GM12878 (cell line): ENCODE measurements at regions of chr2 and their contacts with region 1.

Region 1: DNA sequence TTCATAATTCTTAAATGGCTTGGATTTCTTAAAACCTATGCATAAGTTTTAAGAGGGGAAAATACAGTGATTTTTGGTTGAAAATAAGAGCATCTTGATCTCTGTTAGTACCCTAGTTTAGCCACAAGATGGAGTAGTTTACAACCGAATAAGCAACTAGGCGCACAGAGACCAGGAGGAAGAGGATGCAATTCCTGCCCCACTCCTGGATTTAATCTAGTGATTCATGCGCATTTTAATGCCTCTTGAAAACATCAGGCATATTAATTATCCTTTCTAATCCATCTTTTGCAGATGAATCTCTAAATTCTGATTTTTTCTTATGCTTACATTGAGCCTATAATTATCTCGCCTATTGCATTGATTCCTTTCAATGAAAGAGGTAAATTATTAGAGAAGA is 76.7 kb downstream of the MRPS9 start:
- DNase-seq: no peak
- ATAC-seq: peak; percentile 70
- H3K4me3 ChIP-seq: no peak overlapping the region
- H3K27ac ChIP-seq: no peak overlapping the region
- H3K4me1 ChIP-seq: peaks cover 5% of the 10 kb centered on the region
- H3K27me3 ChIP-seq: no peaks in the 10 kb centered on the region
- CTCF ChIP-seq: peak; percentile 70 to 79 (median 74)
- EP300 ChIP-seq: no peak
- POLR2A ChIP-seq: no peak
- RAD21 ChIP-seq: peak; percentile 94

Region 2: GRCh38 chr2:104638190-104638858 is 476.2 kb before region 1 on chr2:
- CTCF ChIA-PET with region 1: no interaction called
- POLR2A ChIA-PET with region 1: no interaction called
- RAD21 ChIA-PET with region 1: no interaction called
- SMC1A ChIA-PET with region 1: no interaction called
- in situ Hi-C with region 1: no loop called
- intact Hi-C with region 1: no loop called
- DNase-seq: no peak
- ATAC-seq: no peak
- H3K4me3 ChIP-seq: no peak overlapping the region
- H3K27ac ChIP-seq: no peak overlapping the region
- H3K4me1 ChIP-seq: no peaks in the 10 kb centered on the region
- H3K27me3 ChIP-seq: no peaks in the 10 kb centered on the region
- CTCF ChIP-seq: no peak
- EP300 ChIP-seq: no peak
- POLR2A ChIP-seq: no peak
- RAD21 ChIP-seq: no peak

Region 3: GRCh38 chr2:104804148-104804890 is 310.2 kb before region 1 on chr2:
- CTCF ChIA-PET with region 1: no interaction called
- POLR2A ChIA-PET with region 1: no interaction called
- RAD21 ChIA-PET with region 1: no interaction called
- SMC1A ChIA-PET with region 1: no interaction called
- in situ Hi-C with region 1: no loop called
- intact Hi-C with region 1: no loop called
- DNase-seq: no peak
- ATAC-seq: no peak
- H3K4me3 ChIP-seq: no peak overlapping the region
- H3K27ac ChIP-seq: no peak overlapping the region
- H3K4me1 ChIP-seq: no peaks in the 10 kb centered on the region
- H3K27me3 ChIP-seq: no peaks in the 10 kb centered on the region
- CTCF ChIP-seq: no peak
- EP300 ChIP-seq: no peak
- POLR2A ChIP-seq: no peak
- RAD21 ChIP-seq: no peak

Region 4: GRCh38 chr2:105005181-105005951 is 109.2 kb before region 1 on chr2:
- CTCF ChIA-PET with region 1: no interaction called
- POLR2A ChIA-PET with region 1: no interaction called
- RAD21 ChIA-PET with region 1: no interaction called
- SMC1A ChIA-PET with region 1: no interaction called
- in situ Hi-C with region 1: no loop called
- intact Hi-C with region 1: no loop called
- DNase-seq: no peak
- ATAC-seq: no peak
- H3K4me3 ChIP-seq: no peak overlapping the region
- H3K27ac ChIP-seq: no peak overlapping the region
- H3K4me1 ChIP-seq: no peaks in the 10 kb centered on the region
- H3K27me3 ChIP-seq: no peaks in the 10 kb centered on the region
- CTCF ChIP-seq: no peak
- EP300 ChIP-seq: no peak
- POLR2A ChIP-seq: no peak
- RAD21 ChIP-seq: no peak

Region 5: GRCh38 chr2:105068875-105069274 is 45.7 kb before region 1 on chr2:
- CTCF ChIA-PET with region 1: no interaction called
- POLR2A ChIA-PET with region 1: no interaction called
- RAD21 ChIA-PET with region 1: no interaction called
- SMC1A ChIA-PET with region 1: no interaction called
- in situ Hi-C with region 1: no loop called
- intact Hi-C with region 1: no loop called
- DNase-seq: no peak
- ATAC-seq: no peak
- H3K4me3 ChIP-seq: no peak overlapping the region
- H3K27ac ChIP-seq: no peak overlapping the region
- H3K4me1 ChIP-seq: peaks cover 5% of the 10 kb centered on the region; the same call in 1 of the 2 replicates
- H3K27me3 ChIP-seq: no peaks in the 10 kb centered on the region
- CTCF ChIP-seq: no peak
- EP300 ChIP-seq: no peak
- POLR2A ChIP-seq: no peak
- RAD21 ChIP-seq: no peak

Region 6: GRCh38 chr2:105099153-105099552 is 15.4 kb before region 1 on chr2:
- CTCF ChIA-PET with region 1: interaction called, 18 read pairs
- POLR2A ChIA-PET with region 1: no interaction called
- RAD21 ChIA-PET with region 1: no interaction called
- SMC1A ChIA-PET with region 1: interaction called, 4 read pairs
- in situ Hi-C with region 1: no loop called
- intact Hi-C with region 1: no loop called
- DNase-seq: no peak
- ATAC-seq: no peak
- H3K4me3 ChIP-seq: no peak overlapping the region
- H3K27ac ChIP-seq: no peak overlapping the region
- H3K4me1 ChIP-seq: no peaks in the 10 kb centered on the region
- H3K27me3 ChIP-seq: no peaks in the 10 kb centered on the region
- CTCF ChIP-seq: no peak
- EP300 ChIP-seq: no peak
- POLR2A ChIP-seq: no peak
- RAD21 ChIP-seq: no peak

Region 7: DNA sequence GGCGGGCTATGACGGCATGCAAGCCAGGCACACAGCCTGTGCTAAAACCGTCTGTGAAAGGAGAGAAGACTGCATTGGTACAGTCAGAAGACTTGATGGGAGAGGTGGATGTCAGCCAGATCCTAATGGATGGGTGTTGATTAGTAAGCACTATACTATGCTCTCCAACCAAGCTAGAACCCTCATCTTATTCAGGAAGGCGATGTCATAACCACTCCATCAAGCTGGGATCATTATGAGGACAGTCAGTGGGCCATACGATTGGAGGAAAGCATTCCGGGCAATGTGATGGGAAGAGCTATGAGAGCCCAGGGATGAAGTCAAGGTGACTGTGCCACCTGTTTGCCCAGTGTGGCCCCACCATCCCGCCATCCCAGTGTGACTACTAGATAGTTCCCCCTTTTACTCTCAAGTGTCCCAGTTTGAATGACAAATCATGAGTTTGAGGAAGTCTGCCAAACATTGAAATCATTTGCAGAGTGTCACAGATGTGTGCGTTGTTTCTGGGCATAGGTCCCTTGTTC is 10.3 kb before region 1 on chr2:
- CTCF ChIA-PET with region 1: interaction called, 18 read pairs
- POLR2A ChIA-PET with region 1: no interaction called
- RAD21 ChIA-PET with region 1: interaction called, 3 read pairs
- SMC1A ChIA-PET with region 1: interaction called, 4 read pairs
- in situ Hi-C with region 1: no loop called
- intact Hi-C with region 1: no loop called
- DNase-seq: no peak
- ATAC-seq: no peak
- H3K4me3 ChIP-seq: no peak overlapping the region
- H3K27ac ChIP-seq: no peak overlapping the region
- H3K4me1 ChIP-seq: no peaks in the 10 kb centered on the region
- H3K27me3 ChIP-seq: no peaks in the 10 kb centered on the region
- CTCF ChIP-seq: no peak
- EP300 ChIP-seq: no peak
- POLR2A ChIP-seq: no peak
- RAD21 ChIP-seq: no peak

Region 8: GRCh38 chr2:105125428-105125827 is 10.9 kb after region 1 on chr2:
- CTCF ChIA-PET with region 1: interaction called, 15 read pairs
- POLR2A ChIA-PET with region 1: no interaction called
- RAD21 ChIA-PET with region 1: no interaction called
- SMC1A ChIA-PET with region 1: no interaction called
- in situ Hi-C with region 1: no loop called
- intact Hi-C with region 1: no loop called
- DNase-seq: no peak
- ATAC-seq: no peak
- H3K4me3 ChIP-seq: no peak overlapping the region
- H3K27ac ChIP-seq: no peak overlapping the region
- H3K4me1 ChIP-seq: peaks cover 10% of the 10 kb centered on the region
- H3K27me3 ChIP-seq: no peaks in the 10 kb centered on the region
- CTCF ChIP-seq: no peak
- EP300 ChIP-seq: no peak
- POLR2A ChIP-seq: no peak
- RAD21 ChIP-seq: no peak

Region 9: GRCh38 chr2:105179469-105180372 is 65.2 kb after region 1 on chr2:
- CTCF ChIA-PET with region 1: interaction called, 26 read pairs
- POLR2A ChIA-PET with region 1: no interaction called
- RAD21 ChIA-PET with region 1: interaction called, 10 read pairs
- SMC1A ChIA-PET with region 1: interaction called, 8 read pairs
- in situ Hi-C with region 1: no loop called
- intact Hi-C with region 1: loop called (anchors 1 kb)
- DNase-seq: no peak
- ATAC-seq: peak; percentile 25; the same call in 1 of the 3 replicates
- H3K4me3 ChIP-seq: no peak overlapping the region
- H3K27ac ChIP-seq: no peak overlapping the region
- H3K4me1 ChIP-seq: peaks cover 10% of the 10 kb centered on the region
- H3K27me3 ChIP-seq: no peaks in the 10 kb centered on the region; a peak in 1 of 4 replicates
- CTCF ChIP-seq: peak; percentile 28 to 40 (median 38)
- EP300 ChIP-seq: no peak
- POLR2A ChIP-seq: no peak
- RAD21 ChIP-seq: 0 out of 2 replicates have a peak, but pooled peaks have one; percentile 19

Region 10: DNA sequence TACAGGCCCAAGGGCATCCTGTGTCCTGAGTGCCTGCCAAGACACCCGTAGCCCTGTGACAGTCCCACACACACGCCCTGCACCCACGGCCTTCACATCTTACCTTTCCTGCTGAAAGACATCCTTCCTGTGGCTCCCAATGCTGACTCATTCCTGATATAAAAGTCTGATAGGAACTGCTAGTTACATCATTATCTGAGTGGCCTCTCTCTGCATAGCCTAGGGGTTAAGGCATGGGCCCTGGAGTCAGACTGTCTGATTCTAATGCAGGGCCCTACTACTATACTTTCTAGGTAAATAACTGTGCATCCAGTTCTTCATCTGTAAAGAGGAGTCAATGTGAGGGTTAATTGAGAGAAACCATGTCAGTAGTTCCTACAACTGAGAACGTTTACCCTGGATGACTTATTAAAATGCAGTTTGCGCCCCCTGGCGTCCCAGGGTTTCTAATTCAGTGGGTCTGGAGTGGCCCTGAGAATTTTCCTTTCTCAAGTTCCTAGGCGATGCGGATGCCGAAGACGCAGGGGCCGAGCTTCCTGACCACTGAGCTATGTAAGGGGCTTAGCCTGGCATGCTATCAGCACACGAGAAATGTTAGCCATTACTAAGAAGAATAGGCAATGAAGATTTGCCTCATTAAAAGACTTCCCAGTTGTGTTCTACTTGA is 121.0 kb after region 1 on chr2:
- CTCF ChIA-PET with region 1: interaction called, 291 read pairs
- POLR2A ChIA-PET with region 1: no interaction called
- RAD21 ChIA-PET with region 1: interaction called, 41 read pairs
- SMC1A ChIA-PET with region 1: interaction called, 37 read pairs
- in situ Hi-C with region 1: loop called (anchors 5 kb)
- intact Hi-C with region 1: loop called (anchors 1 kb)
- DNase-seq: no peak
- ATAC-seq: peak; percentile 87
- H3K4me3 ChIP-seq: no peak overlapping the region
- H3K27ac ChIP-seq: no peak overlapping the region
- H3K4me1 ChIP-seq: no peaks in the 10 kb centered on the region
- H3K27me3 ChIP-seq: peaks cover 0 to 1% of the 10 kb centered on the region in 2 experiments; a peak in 1 of 4 replicates
- CTCF ChIP-seq: peak; percentile 69 to 77 (median 70)
- EP300 ChIP-seq: no peak
- POLR2A ChIP-seq: no peak
- RAD21 ChIP-seq: peak; percentile 72

Region 11: DNA sequence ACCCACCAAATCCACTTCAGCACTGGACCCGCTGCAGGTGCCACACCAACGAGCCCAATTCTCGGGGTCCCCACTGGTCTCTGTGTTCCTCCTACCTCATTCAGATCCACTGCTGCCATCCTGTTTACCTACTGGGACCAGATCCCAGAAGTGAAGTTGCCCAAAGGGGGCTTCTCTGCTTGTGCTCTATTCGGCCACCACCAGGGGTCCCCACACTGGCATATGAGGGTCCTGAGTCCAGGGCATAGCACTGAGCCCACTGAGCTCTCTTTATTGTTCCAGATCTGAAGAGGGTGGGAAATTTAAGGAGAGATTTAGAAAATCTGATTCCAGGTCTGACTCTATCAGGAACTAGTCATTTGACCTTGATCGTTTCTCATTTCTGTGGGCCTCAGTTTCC is 129.4 kb after region 1 on chr2:
- CTCF ChIA-PET with region 1: interaction called, 291 read pairs
- POLR2A ChIA-PET with region 1: no interaction called
- RAD21 ChIA-PET with region 1: interaction called, 41 read pairs
- SMC1A ChIA-PET with region 1: interaction called, 37 read pairs
- in situ Hi-C with region 1: loop called (anchors 5 kb)
- intact Hi-C with region 1: no loop called
- DNase-seq: no peak
- ATAC-seq: no peak; the same call in 2 of the 3 replicates
- H3K4me3 ChIP-seq: no peak overlapping the region
- H3K27ac ChIP-seq: no peak overlapping the region
- H3K4me1 ChIP-seq: no peaks in the 10 kb centered on the region
- H3K27me3 ChIP-seq: no peaks in the 10 kb centered on the region
- CTCF ChIP-seq: peak in 2 of 3 experiments; percentile 16; a peak in 1 of 6 replicates
- EP300 ChIP-seq: no peak
- POLR2A ChIP-seq: no peak
- RAD21 ChIP-seq: no peak